CD4-positive, alpha-beta T cell (primary cell): ENCODE measurements at regions of chr9 and their contacts with region 1.

Region 1: GRCh38 chr9:110217656-110218099 is 9.7 kb upstream of the C9orf152 start:
- DNase-seq: peak in 3 of 14 experiments; percentile 22 to 48 (median 45)
- ATAC-seq: no peak
- H3K4me3 ChIP-seq: no peak overlapping the region
- H3K4me3 Mint-ChIP-seq: no peak overlapping the region
- H3K27ac ChIP-seq: no peak overlapping the region
- H3K27ac Mint-ChIP-seq: no peak overlapping the region
- H3K4me1 ChIP-seq: peaks cover 3% of the 10 kb centered on the region
- H3K4me1 Mint-ChIP-seq: no peaks in the 10 kb centered on the region
- H3K27me3 ChIP-seq: no peaks in the 10 kb centered on the region
- H3K27me3 Mint-ChIP-seq: peaks cover 6% of the 10 kb centered on the region
- CTCF ChIP-seq: peak; percentile 81

Region 2: GRCh38 chr9:109341565-109341964 is 876.1 kb before region 1 on chr9:
- CTCF ChIA-PET with region 1: no interaction called
- POLR2A ChIA-PET with region 1: no interaction called
- intact Hi-C with region 1: no loop called
- DNase-seq: no peak
- ATAC-seq: no peak
- H3K4me3 ChIP-seq: no peak overlapping the region
- H3K4me3 Mint-ChIP-seq: no peak overlapping the region
- H3K27ac ChIP-seq: no peak overlapping the region
- H3K27ac Mint-ChIP-seq: no peak overlapping the region
- H3K4me1 ChIP-seq: no peaks in the 10 kb centered on the region
- H3K4me1 Mint-ChIP-seq: no peaks in the 10 kb centered on the region
- H3K27me3 ChIP-seq: peaks cover 0 to 7% of the 10 kb centered on the region in 2 experiments
- H3K27me3 Mint-ChIP-seq: peaks cover 9% of the 10 kb centered on the region
- CTCF ChIP-seq: no peak

Region 3: DNA sequence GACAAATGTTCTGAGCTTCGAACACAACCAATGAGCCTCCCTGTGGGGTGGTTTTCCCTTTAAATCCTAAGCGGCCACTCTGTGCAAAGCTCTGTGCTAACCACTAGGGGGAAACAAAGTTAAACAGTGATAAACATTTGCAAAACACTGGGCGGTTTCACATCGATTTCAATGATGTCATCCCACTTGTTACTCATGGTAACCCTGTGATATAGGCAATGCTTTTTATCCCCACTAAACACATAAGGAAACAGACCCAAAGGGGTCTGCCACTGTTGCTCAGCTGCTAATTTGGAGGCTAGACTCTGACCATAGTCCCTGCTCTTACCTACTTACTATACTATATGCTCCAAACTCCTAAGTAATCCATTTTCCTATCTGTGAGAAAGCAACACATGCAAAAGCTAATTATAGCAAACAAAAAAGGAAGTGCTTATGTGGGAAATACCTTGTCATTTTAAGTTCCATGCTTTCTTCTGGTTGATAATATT is 776.8 kb before region 1 on chr9:
- CTCF ChIA-PET with region 1: no interaction called
- POLR2A ChIA-PET with region 1: no interaction called
- intact Hi-C with region 1: loop called in 1 of 2 experiments (anchors 5 kb)
- DNase-seq: peak in 12 of 14 experiments; percentile 2 to 60 (median 13)
- ATAC-seq: peak; percentile 94
- H3K4me3 ChIP-seq: no peak overlapping the region
- H3K4me3 Mint-ChIP-seq: no peak overlapping the region
- H3K27ac ChIP-seq: no peak overlapping the region
- H3K27ac Mint-ChIP-seq: no peak overlapping the region
- H3K4me1 ChIP-seq: peaks cover 7% of the 10 kb centered on the region
- H3K4me1 Mint-ChIP-seq: peaks cover 16% of the 10 kb centered on the region
- H3K27me3 ChIP-seq: peaks cover 3 to 12% of the 10 kb centered on the region in 2 experiments
- H3K27me3 Mint-ChIP-seq: peaks cover 19% of the 10 kb centered on the region
- CTCF ChIP-seq: peak; percentile 63

Region 4: GRCh38 chr9:109579191-109579948 is 638.3 kb before region 1 on chr9:
- CTCF ChIA-PET with region 1: interaction called, 3 read pairs
- POLR2A ChIA-PET with region 1: no interaction called
- intact Hi-C with region 1: loop called (anchors 5 kb)
- DNase-seq: no peak
- ATAC-seq: no peak
- H3K4me3 ChIP-seq: no peak overlapping the region
- H3K4me3 Mint-ChIP-seq: no peak overlapping the region
- H3K27ac ChIP-seq: no peak overlapping the region
- H3K27ac Mint-ChIP-seq: no peak overlapping the region
- H3K4me1 ChIP-seq: no peaks in the 10 kb centered on the region
- H3K4me1 Mint-ChIP-seq: no peaks in the 10 kb centered on the region
- H3K27me3 ChIP-seq: no peaks in the 10 kb centered on the region
- H3K27me3 Mint-ChIP-seq: peaks cover 4% of the 10 kb centered on the region
- CTCF ChIP-seq: no peak

Region 5: GRCh38 chr9:110069326-110070248 is 148.1 kb before region 1 on chr9:
- CTCF ChIA-PET with region 1: no interaction called
- POLR2A ChIA-PET with region 1: no interaction called
- intact Hi-C with region 1: loop called in 1 of 2 experiments (anchors 5 kb)
- DNase-seq: peak in 2 of 14 experiments; percentile 50 to 66
- ATAC-seq: no peak
- H3K4me3 ChIP-seq: no peak overlapping the region
- H3K4me3 Mint-ChIP-seq: no peak overlapping the region
- H3K27ac ChIP-seq: no peak overlapping the region
- H3K27ac Mint-ChIP-seq: no peak overlapping the region
- H3K4me1 ChIP-seq: no peaks in the 10 kb centered on the region
- H3K4me1 Mint-ChIP-seq: peaks cover 14% of the 10 kb centered on the region
- H3K27me3 ChIP-seq: no peaks in the 10 kb centered on the region
- H3K27me3 Mint-ChIP-seq: no peaks in the 10 kb centered on the region
- CTCF ChIP-seq: no peak